CD8-positive, alpha-beta T cell (primary cell): ENCODE measurements at regions of chr7 and their contacts with region 1.

Region 1: GRCh38 chr7:91880413-91881241 is at the start of gene MTERF1:
- DNase-seq: peak; percentile 82 to 96 (median 95)
- ATAC-seq: peak; percentile 96
- H3K4me3 ChIP-seq: peak within 1 kb of the TSS; percentile 78 to 90
- H3K4me3 Mint-ChIP-seq: peak within 1 kb of the TSS; percentile 94
- H3K27ac ChIP-seq: peak within 1 kb of the TSS; percentile 63 to 77
- H3K27ac Mint-ChIP-seq: peak within 1 kb of the TSS; percentile 97
- H3K4me1 ChIP-seq: peaks cover 21% of the 10 kb centered on the region
- H3K4me1 Mint-ChIP-seq: peaks cover 40% of the 10 kb centered on the region
- H3K27me3 ChIP-seq: no peaks in the 10 kb centered on the region
- H3K27me3 Mint-ChIP-seq: no peaks in the 10 kb centered on the region
- CTCF ChIP-seq: peak; percentile 97
- total RNA-seq, gene MTERF1: 12.3 to 12.5 TPM

Region 2: DNA sequence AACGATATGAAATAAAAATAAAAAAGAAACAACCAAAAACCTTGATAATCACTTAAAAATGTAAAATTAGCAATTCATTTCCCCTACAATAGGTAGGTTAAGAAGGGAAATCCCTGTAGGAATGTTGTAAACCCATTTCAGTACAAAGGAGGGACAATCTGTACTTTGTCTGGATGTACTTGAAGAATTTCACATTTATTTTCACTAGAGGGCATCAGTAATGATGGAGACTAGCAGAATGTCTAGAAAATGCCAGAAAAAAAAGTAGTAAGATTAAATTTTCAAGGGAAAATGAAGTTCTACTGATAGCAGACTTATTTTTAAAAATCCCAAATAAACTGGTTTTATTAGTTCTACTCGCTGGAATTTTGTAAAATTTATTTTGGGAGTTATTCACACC is 825.4 kb before region 1 on chr7:
- CTCF ChIA-PET with region 1: no interaction called
- POLR2A ChIA-PET with region 1: no interaction called
- intact Hi-C with region 1: no loop called
- DNase-seq: no peak
- ATAC-seq: no peak
- H3K4me3 ChIP-seq: no peak overlapping the region
- H3K4me3 Mint-ChIP-seq: no peak overlapping the region
- H3K27ac ChIP-seq: no peak overlapping the region
- H3K27ac Mint-ChIP-seq: no peak overlapping the region
- H3K4me1 ChIP-seq: no peaks in the 10 kb centered on the region
- H3K4me1 Mint-ChIP-seq: peaks cover 9% of the 10 kb centered on the region
- H3K27me3 ChIP-seq: no peaks in the 10 kb centered on the region
- H3K27me3 Mint-ChIP-seq: no peaks in the 10 kb centered on the region
- CTCF ChIP-seq: no peak

Region 3: DNA sequence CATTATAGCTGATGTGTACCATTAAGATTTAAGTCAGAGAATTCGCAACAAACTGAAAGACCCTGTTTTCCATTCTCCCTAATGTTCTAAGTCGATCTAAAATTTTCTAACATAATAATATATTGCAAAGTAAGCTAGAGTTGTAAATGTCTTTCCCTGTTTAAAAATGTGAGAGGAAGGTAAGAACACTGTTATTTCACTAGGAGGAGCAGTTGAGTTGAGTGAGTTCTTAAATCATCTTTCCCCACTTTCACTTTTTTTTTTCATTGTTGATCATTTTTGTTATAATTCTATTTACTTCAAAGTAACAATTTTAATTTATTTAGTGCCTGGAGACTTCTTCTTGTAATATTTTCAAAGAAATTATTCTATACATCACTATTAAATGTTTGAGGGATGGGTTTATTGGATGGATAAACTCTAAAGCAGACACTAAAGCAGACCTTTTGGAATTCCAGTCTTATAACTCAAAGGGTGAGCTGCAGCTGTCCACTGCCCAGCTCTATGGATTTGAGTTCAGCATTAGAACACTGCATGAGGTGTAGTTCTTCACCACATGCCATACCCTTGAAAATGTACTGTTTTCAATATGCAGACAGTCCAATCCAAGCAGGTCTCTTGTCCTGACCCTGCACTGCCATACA is 797.7 kb before region 1 on chr7:
- CTCF ChIA-PET with region 1: no interaction called
- POLR2A ChIA-PET with region 1: no interaction called
- intact Hi-C with region 1: loop called (anchors 1 to 5 kb)
- DNase-seq: peak in 1 of 9 experiments; percentile 39
- ATAC-seq: peak; percentile 26
- H3K4me3 ChIP-seq: no peak overlapping the region
- H3K4me3 Mint-ChIP-seq: no peak overlapping the region
- H3K27ac ChIP-seq: no peak overlapping the region
- H3K27ac Mint-ChIP-seq: no peak overlapping the region
- H3K4me1 ChIP-seq: peaks cover 27% of the 10 kb centered on the region
- H3K4me1 Mint-ChIP-seq: peaks cover 32% of the 10 kb centered on the region
- H3K27me3 ChIP-seq: no peaks in the 10 kb centered on the region
- H3K27me3 Mint-ChIP-seq: no peaks in the 10 kb centered on the region
- CTCF ChIP-seq: peak; percentile 39

Region 4: DNA sequence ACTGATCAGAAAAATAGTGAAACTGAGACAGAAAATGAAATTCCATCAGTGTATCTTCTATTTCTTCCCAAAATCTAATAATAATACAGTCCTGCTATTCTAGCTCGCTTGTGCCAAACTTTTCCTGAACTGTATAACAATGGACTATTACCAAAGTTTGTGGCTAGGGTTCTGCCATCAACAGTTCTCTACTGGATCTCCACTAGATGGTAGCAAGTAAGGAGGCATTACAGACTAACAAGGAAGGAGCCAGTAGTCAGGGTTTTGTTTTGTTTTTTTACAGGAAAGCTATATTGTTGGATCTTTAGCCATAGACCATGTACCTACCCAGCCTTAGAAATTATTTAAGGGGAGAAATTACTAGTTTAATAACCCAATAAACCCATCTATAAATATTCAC is 11.0 kb before region 1 on chr7:
- CTCF ChIA-PET with region 1: interaction called, 11 read pairs
- POLR2A ChIA-PET with region 1: interaction called, 7 read pairs
- intact Hi-C with region 1: no loop called
- DNase-seq: no peak
- ATAC-seq: no peak
- H3K4me3 ChIP-seq: no peak overlapping the region
- H3K4me3 Mint-ChIP-seq: no peak overlapping the region
- H3K27ac ChIP-seq: no peak overlapping the region
- H3K27ac Mint-ChIP-seq: no peak overlapping the region
- H3K4me1 ChIP-seq: no peaks in the 10 kb centered on the region
- H3K4me1 Mint-ChIP-seq: peaks cover 14% of the 10 kb centered on the region
- H3K27me3 ChIP-seq: no peaks in the 10 kb centered on the region
- H3K27me3 Mint-ChIP-seq: no peaks in the 10 kb centered on the region
- CTCF ChIP-seq: no peak

Region 5: DNA sequence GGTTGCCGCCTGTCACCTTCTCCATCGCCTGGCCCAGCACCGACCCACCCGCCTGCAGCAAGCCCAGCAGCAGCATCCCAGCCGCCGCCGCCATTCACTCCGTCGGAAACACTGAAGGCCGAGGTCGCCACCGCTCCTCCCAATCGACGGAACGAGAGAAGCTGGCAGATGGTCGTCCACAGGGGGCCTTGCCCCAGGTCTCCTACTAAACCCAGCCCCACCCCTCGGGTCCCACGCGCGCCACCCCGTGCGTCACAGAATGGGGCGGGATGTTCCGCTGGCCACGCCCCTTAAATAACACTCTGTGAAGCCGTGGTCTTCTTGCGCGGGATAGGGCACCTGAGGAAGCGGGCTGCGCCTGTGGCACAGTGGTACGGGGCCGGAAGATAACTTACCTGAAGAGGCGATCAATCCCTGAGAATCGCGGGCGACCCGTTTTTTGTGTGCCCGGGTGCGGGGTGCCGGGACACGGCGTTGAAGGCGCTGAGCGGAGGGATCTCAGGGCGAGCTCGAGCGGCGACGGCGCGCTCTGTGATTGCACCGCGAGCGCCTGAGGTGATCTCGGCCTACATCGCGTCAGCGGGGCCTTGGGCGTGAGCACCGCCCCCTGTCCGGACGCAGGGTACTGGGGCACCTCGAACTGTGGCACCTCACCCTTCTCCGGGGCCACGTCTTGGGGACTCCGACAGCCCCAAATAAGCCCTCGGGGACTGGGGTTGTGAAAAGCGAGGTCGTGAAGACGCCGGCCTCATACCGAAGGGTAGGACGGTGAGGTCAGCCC is 253.8 kb after region 1 on chr7 and contains the start of gene CYP51A1:
- CTCF ChIA-PET with region 1: no interaction called
- POLR2A ChIA-PET with region 1: no interaction called
- intact Hi-C with region 1: loop called (anchors 2 to 5 kb)
- DNase-seq: peak; percentile 87 to 97 (median 94)
- ATAC-seq: peak; percentile 86
- H3K4me3 ChIP-seq: peak within 1 kb of the TSS; percentile 72 to 94
- H3K4me3 Mint-ChIP-seq: peak within 1 kb of the TSS; percentile 100
- H3K27ac ChIP-seq: peak within 1 kb of the TSS; percentile 88 to 93
- H3K27ac Mint-ChIP-seq: peak within 1 kb of the TSS; percentile 100
- H3K4me1 ChIP-seq: peaks cover 11% of the 10 kb centered on the region
- H3K4me1 Mint-ChIP-seq: peaks cover 32% of the 10 kb centered on the region
- H3K27me3 ChIP-seq: no peaks in the 10 kb centered on the region
- H3K27me3 Mint-ChIP-seq: no peaks in the 10 kb centered on the region
- CTCF ChIP-seq: no peak
- total RNA-seq, gene CYP51A1: 44.3 to 44.4 TPM

Region 6: GRCh38 chr7:92528188-92528957 is 647.7 kb after region 1 on chr7 and contains the starts of genes PEX1 and RBM48:
- CTCF ChIA-PET with region 1: no interaction called
- POLR2A ChIA-PET with region 1: interaction called, 6 read pairs
- intact Hi-C with region 1: loop called (anchors 2 to 5 kb)
- DNase-seq: peak; percentile 90 to 99 (median 94)
- ATAC-seq: peak; percentile 89
- H3K4me3 ChIP-seq: peak within 1 kb of the TSS; percentile 94 to 95
- H3K4me3 Mint-ChIP-seq: peak within 1 kb of the TSS; percentile 91
- H3K27ac ChIP-seq: peak within 1 kb of the TSS; percentile 91 to 98
- H3K27ac Mint-ChIP-seq: peak within 1 kb of the TSS; percentile 98
- H3K4me1 ChIP-seq: peaks cover 22% of the 10 kb centered on the region
- H3K4me1 Mint-ChIP-seq: peaks cover 51% of the 10 kb centered on the region
- H3K27me3 ChIP-seq: no peaks in the 10 kb centered on the region
- H3K27me3 Mint-ChIP-seq: no peaks in the 10 kb centered on the region
- CTCF ChIP-seq: no peak
- total RNA-seq, gene PEX1: 17.8 to 18.1 TPM
- total RNA-seq, gene RBM48: 52.7 to 54.6 TPM

Region 7: DNA sequence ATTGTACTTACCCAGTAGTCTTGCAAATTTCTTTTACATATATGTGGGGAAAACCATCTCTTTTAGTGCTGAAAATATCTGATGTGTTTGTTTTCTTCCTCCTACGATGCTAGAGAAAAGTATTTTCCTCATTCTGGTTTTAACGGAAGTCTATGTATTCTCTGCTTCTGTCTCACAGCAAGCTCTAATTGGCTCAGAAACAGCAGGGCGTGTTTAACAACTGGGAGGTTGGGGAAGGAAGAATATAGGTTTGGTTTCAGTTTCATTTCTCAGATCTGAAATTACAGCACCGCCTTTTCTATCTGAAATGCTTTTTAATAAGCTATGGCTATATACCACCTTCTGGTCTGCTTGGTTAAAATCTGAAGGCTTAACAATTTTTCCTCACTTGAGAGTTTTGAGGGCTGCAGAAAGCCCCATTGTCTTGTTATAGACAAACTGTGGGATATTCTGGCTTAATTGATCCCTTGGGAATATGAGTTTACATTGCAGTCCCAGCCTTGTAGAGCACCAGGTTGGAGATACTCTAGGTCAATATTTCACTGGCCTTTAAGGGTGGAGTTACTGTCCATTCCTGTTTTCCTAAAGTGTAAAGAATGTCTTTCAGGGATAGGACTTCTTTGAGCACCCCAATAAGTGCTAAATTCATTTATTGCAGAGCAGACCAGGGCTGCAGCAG is 1237.4 kb after region 1 on chr7 and contains the start of gene SAMD9:
- CTCF ChIA-PET with region 1: no interaction called
- POLR2A ChIA-PET with region 1: no interaction called
- intact Hi-C with region 1: loop called in 1 of 2 experiments (anchors 10 kb)
- DNase-seq: peak; percentile 18 to 91 (median 60)
- ATAC-seq: peak; percentile 99
- H3K4me3 ChIP-seq: peak within 1 kb of the TSS; percentile 61 to 64
- H3K4me3 Mint-ChIP-seq: peak within 1 kb of the TSS; percentile 80
- H3K27ac ChIP-seq: peak within 1 kb of the TSS; percentile 58 to 81
- H3K27ac Mint-ChIP-seq: peak within 1 kb of the TSS; percentile 84
- H3K4me1 ChIP-seq: peaks cover 28% of the 10 kb centered on the region
- H3K4me1 Mint-ChIP-seq: peaks cover 47% of the 10 kb centered on the region
- H3K27me3 ChIP-seq: no peaks in the 10 kb centered on the region
- H3K27me3 Mint-ChIP-seq: no peaks in the 10 kb centered on the region
- CTCF ChIP-seq: no peak
- total RNA-seq, gene SAMD9: 23.5 to 23.8 TPM